ENCODE measurements at regions of chr10 and their contacts with region 1.

Region 1: GRCh38 chr10:7121154-7121810 is 289.6 kb downstream of the SFMBT2 start:
- DNase-seq: peak; percentile 78
- ATAC-seq: peak; percentile 80
- H3K4me3 ChIP-seq: no peak overlapping the region
- H3K4me3 Mint-ChIP-seq: no peak overlapping the region
- H3K27ac ChIP-seq: no peak overlapping the region
- H3K27ac Mint-ChIP-seq: no peak overlapping the region
- H3K4me1 ChIP-seq: peaks cover 4 to 5% of the 10 kb centered on the region in 2 donors
- H3K4me1 Mint-ChIP-seq: peaks cover 5% of the 10 kb centered on the region
- H3K27me3 ChIP-seq: no peaks in the 10 kb centered on the region
- H3K27me3 Mint-ChIP-seq: peaks cover 11% of the 10 kb centered on the region
- CTCF ChIP-seq: peak; percentile 82

Region 2: DNA sequence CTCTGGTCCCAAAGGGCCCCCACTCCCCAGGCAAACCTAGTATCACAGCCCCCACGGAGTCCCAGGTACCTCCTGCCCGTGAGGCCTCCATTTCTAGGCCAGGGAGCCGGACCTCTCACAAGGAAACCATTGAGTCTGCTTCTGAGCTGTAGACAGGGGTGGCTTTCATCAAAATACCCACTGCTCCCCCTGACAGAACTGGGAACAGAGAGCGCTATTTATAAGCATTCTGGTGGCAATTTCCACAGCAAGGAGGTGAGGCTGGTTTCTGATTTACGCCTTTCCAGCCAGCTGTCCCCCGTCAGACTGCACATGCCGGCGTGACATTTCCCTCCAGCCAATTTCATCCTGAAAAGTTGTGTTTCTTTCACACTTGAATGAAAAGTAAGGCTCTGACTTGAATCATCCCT is 133.7 kb before region 1 on chr10:
- CTCF ChIA-PET with region 1: no interaction called
- POLR2A ChIA-PET with region 1: no interaction called
- intact Hi-C with region 1: no loop called
- DNase-seq: no peak
- ATAC-seq: no peak
- H3K4me3 ChIP-seq: no peak overlapping the region
- H3K4me3 Mint-ChIP-seq: no peak overlapping the region
- H3K27ac ChIP-seq: no peak overlapping the region
- H3K27ac Mint-ChIP-seq: no peak overlapping the region
- H3K4me1 ChIP-seq: peaks cover 0 to 8% of the 10 kb centered on the region in 2 donors
- H3K4me1 Mint-ChIP-seq: peaks cover 4% of the 10 kb centered on the region
- H3K27me3 ChIP-seq: no peaks in the 10 kb centered on the region
- H3K27me3 Mint-ChIP-seq: peaks cover 4% of the 10 kb centered on the region
- CTCF ChIP-seq: no peak

Region 3: GRCh38 chr10:7133278-7133677 is 12.0 kb after region 1 on chr10:
- CTCF ChIA-PET with region 1: interaction called, 14 read pairs
- POLR2A ChIA-PET with region 1: no interaction called
- intact Hi-C with region 1: no loop called
- DNase-seq: no peak
- ATAC-seq: no peak
- H3K4me3 ChIP-seq: no peak overlapping the region
- H3K4me3 Mint-ChIP-seq: no peak overlapping the region
- H3K27ac ChIP-seq: no peak overlapping the region
- H3K27ac Mint-ChIP-seq: no peak overlapping the region
- H3K4me1 ChIP-seq: no peaks in the 10 kb centered on the region
- H3K4me1 Mint-ChIP-seq: peaks cover 2% of the 10 kb centered on the region
- H3K27me3 ChIP-seq: peaks cover 0 to 4% (median 0%) of the 10 kb centered on the region in 4 experiments
- H3K27me3 Mint-ChIP-seq: peaks cover 45% of the 10 kb centered on the region
- CTCF ChIP-seq: no peak

Region 4: DNA sequence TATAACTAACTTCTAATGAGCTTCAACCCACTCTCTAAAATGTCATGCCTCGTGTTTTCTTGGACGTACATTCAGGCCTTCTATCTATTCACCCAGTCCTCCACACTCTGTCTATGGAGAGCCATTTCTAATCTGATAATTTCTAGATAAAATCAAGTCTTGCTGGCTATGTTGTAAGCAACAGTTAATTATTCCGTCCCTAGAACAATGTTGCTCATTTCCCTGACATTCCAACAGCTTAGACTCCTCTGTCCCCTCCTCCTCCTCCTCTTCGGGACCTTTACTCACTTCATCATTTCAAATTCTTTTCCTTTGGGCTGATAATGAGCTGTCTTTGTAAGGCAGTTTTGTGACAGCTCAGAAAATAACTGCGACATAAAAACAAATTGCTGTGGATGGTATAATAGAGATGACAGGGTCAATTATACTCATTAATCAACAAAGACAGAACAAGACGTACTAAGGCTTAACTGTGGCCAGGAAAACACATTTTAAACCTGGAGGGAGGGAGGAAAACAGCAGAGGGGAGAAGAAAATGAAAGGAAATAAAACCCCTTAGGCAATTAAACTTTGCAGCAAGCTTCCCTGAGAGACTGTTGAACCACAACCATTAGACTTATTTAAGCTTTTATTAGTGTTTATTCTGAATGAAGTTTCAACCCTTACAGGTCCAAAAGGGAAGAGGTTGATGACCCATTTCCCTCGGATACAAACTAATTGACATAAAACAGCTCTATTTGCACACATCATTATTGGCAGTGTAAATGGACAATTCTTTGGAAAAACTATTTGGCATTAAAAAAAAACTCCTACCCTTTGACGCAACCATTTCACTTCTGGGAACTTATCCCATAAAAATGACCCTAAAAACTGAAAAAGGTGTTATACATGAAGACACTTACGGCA is 110.5 kb after region 1 on chr10:
- CTCF ChIA-PET with region 1: no interaction called
- POLR2A ChIA-PET with region 1: no interaction called
- intact Hi-C with region 1: no loop called
- DNase-seq: no peak
- ATAC-seq: no peak
- H3K4me3 ChIP-seq: no peak overlapping the region
- H3K4me3 Mint-ChIP-seq: no peak overlapping the region
- H3K27ac ChIP-seq: no peak overlapping the region
- H3K27ac Mint-ChIP-seq: no peak overlapping the region
- H3K4me1 ChIP-seq: no peaks in the 10 kb centered on the region
- H3K4me1 Mint-ChIP-seq: peaks cover 3% of the 10 kb centered on the region
- H3K27me3 ChIP-seq: no peaks in the 10 kb centered on the region
- H3K27me3 Mint-ChIP-seq: no peaks in the 10 kb centered on the region
- CTCF ChIP-seq: no peak

Region 5: GRCh38 chr10:7251696-7252465 is 130.6 kb after region 1 on chr10:
- CTCF ChIA-PET with region 1: no interaction called
- POLR2A ChIA-PET with region 1: no interaction called
- intact Hi-C with region 1: no loop called
- DNase-seq: no peak
- ATAC-seq: no peak
- H3K4me3 ChIP-seq: no peak overlapping the region
- H3K4me3 Mint-ChIP-seq: no peak overlapping the region
- H3K27ac ChIP-seq: no peak overlapping the region
- H3K27ac Mint-ChIP-seq: no peak overlapping the region
- H3K4me1 ChIP-seq: no peaks in the 10 kb centered on the region
- H3K4me1 Mint-ChIP-seq: peaks cover 2% of the 10 kb centered on the region
- H3K27me3 ChIP-seq: no peaks in the 10 kb centered on the region
- H3K27me3 Mint-ChIP-seq: no peaks in the 10 kb centered on the region
- CTCF ChIP-seq: no peak

Region 6: DNA sequence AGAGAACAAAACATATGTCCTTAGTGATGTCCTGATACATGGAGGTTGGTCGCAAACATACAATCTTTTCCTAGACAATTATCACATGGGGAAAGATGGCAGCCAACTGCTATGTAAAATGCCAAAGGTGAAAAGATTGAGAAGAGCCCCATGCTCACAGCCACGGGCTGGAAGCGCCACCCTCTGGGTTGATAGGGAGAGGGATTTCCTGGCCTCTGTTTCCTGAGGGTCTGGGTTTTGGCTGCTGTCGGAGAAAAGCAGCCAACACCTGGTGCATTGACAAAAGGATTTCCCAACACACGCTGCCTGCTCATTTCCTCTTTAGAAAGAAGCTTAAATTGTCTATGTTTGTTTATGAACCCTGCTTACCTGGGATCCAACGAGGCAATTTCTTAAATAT is 501.7 kb after region 1 on chr10:
- CTCF ChIA-PET with region 1: no interaction called
- POLR2A ChIA-PET with region 1: no interaction called
- intact Hi-C with region 1: loop called (anchors 5 kb)
- DNase-seq: peak; percentile 10
- ATAC-seq: no peak
- H3K4me3 ChIP-seq: no peak overlapping the region
- H3K4me3 Mint-ChIP-seq: no peak overlapping the region
- H3K27ac ChIP-seq: no peak overlapping the region
- H3K27ac Mint-ChIP-seq: no peak overlapping the region
- H3K4me1 ChIP-seq: peaks cover 0 to 6% of the 10 kb centered on the region in 2 donors
- H3K4me1 Mint-ChIP-seq: peaks cover 7% of the 10 kb centered on the region
- H3K27me3 ChIP-seq: no peaks in the 10 kb centered on the region
- H3K27me3 Mint-ChIP-seq: peaks cover 4% of the 10 kb centered on the region
- CTCF ChIP-seq: no peak

Measured in B cell (primary cell).